ENCODE measurements at regions of chr6 and their contacts with region 1.

Region 1: GRCh38 chr6:134508862-134509498 is 191.1 kb upstream of the SGK1 start:
- DNase-seq: peak; percentile 93
- H3K4me3 ChIP-seq: no peak overlapping the region
- H3K27ac ChIP-seq: peak overlapping the region; percentile 93
- H3K4me1 ChIP-seq: peaks cover 30% of the 10 kb centered on the region
- H3K27me3 ChIP-seq: no peaks in the 10 kb centered on the region
- CTCF ChIP-seq: peak in 1 of 2 donors; percentile 12

Region 2: DNA sequence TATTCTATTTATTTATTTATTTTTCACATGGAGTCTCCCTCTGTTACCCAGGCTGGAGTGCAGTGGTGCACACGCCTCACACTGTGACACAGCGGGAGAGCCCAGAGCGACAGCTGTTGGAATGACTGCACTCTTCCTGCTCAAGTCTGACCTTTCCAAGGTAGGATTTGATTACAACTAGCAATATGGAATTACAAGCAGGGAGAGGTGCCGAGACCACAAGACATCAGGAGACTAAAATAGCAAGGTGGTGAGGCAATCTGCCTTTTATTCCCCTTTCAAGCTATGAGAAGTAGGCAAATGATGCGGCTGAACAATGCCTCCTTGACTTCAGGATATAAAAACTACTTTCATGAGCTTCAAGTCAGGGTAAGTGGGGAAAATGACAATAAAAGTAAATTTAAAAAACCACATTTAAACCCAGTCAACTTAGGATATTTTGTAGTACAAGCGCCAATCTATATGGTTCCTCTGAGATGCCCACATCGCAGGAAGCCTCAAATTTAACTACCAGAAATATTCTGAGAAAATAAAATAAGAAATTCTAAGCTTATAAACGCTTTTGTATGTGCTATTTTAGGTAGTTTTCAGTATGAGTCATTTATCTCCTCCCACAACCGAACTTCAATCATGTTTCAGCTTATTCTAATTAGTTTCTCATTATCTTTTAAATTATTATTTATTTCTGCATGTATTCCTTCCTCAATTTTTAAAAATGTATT is 44.1 kb before region 1 on chr6:
- CTCF ChIA-PET with region 1: no interaction called
- dilution Hi-C with region 1: no loop called
- in situ Hi-C with region 1: no loop called
- intact Hi-C with region 1: loop called (anchors 5 kb)
- DNase-seq: peak; percentile 93
- H3K4me3 ChIP-seq: no peak overlapping the region
- H3K27ac ChIP-seq: peak overlapping the region; percentile 95
- H3K4me1 ChIP-seq: peaks cover 39% of the 10 kb centered on the region
- H3K27me3 ChIP-seq: no peaks in the 10 kb centered on the region
- CTCF ChIP-seq: no peak